ENCODE measurements at regions of chr22 and their contacts with region 1.

Region 1: DNA sequence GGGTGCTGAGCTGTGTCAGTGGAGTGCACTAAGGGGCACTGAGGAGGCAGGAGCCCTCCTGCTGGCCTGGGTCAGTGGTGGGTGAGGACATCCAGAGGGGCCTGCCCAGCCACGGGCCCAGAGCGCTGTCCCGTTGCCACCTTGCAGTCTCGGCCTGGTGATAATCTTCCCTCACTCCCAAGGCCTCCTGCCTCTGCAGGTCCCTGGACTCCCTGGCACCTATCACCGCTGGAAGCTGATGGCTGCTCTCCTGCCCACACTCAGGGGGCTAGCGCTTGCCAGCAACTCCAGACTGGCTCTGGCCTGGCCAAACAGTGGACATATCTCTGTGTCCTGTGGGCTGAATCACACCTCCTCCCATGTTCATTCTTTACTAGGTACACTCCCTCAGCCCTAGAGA is 86.5 kb upstream of the PITPNB start:
- DNase-seq: peak; percentile 76
- ATAC-seq: peak; percentile 85

Region 2: GRCh38 chr22:27880778-27881394 is 124.6 kb before region 1 on chr22:
- intact Hi-C with region 1: loop called (anchors 2 kb)
- DNase-seq: no peak
- ATAC-seq: peak; percentile 76

Region 3: GRCh38 chr22:28052825-28053269 is 47.3 kb after region 1 on chr22:
- intact Hi-C with region 1: no loop called
- DNase-seq: no peak
- ATAC-seq: no peak